ENCODE measurements at regions of chrX and their contacts with region 1.

Region 1: GRCh38 chrX:15143050-15143824 is 126.6 kb downstream of the ASB9 start:
- DNase-seq: peak; percentile 51 to 58
- H3K4me3 ChIP-seq: no peak overlapping the region
- H3K4me3 Mint-ChIP-seq: no peak overlapping the region
- H3K27ac Mint-ChIP-seq: peak overlapping the region; percentile 54
- H3K4me1 ChIP-seq: peaks cover 10% of the 10 kb centered on the region
- H3K4me1 Mint-ChIP-seq: peaks cover 7% of the 10 kb centered on the region
- H3K27me3 ChIP-seq: no peaks in the 10 kb centered on the region
- H3K27me3 Mint-ChIP-seq: no peaks in the 10 kb centered on the region
- CTCF ChIP-seq: peak; percentile 59 to 79

Region 2: DNA sequence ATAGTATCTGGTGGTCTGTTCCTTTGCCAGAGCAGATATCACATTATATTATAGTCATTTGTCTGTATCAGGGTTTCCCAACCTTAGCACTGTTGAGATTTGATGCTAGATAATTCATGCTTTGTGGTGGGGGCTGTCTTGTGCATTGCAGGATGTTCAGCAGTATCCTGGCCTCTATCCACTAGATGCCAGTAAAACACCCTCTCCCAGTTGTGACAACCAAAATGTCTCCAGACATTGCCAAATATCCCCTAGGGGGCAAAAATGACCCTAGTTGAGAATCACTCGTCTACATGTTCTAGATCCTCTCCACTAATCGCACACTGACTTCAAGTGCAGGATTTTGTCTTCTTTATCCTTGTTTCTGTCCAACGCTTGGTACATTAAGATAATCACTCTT is 431.1 kb before region 1 on chrX:
- CTCF ChIA-PET with region 1: no interaction called
- POLR2A ChIA-PET with region 1: no interaction called
- intact Hi-C with region 1: loop called (anchors 5 kb)
- DNase-seq: no peak
- H3K4me3 ChIP-seq: no peak overlapping the region
- H3K4me3 Mint-ChIP-seq: no peak overlapping the region
- H3K27ac Mint-ChIP-seq: no peak overlapping the region
- H3K4me1 ChIP-seq: no peaks in the 10 kb centered on the region
- H3K4me1 Mint-ChIP-seq: no peaks in the 10 kb centered on the region
- H3K27me3 ChIP-seq: no peaks in the 10 kb centered on the region
- H3K27me3 Mint-ChIP-seq: no peaks in the 10 kb centered on the region
- CTCF ChIP-seq: no peak

Region 3: DNA sequence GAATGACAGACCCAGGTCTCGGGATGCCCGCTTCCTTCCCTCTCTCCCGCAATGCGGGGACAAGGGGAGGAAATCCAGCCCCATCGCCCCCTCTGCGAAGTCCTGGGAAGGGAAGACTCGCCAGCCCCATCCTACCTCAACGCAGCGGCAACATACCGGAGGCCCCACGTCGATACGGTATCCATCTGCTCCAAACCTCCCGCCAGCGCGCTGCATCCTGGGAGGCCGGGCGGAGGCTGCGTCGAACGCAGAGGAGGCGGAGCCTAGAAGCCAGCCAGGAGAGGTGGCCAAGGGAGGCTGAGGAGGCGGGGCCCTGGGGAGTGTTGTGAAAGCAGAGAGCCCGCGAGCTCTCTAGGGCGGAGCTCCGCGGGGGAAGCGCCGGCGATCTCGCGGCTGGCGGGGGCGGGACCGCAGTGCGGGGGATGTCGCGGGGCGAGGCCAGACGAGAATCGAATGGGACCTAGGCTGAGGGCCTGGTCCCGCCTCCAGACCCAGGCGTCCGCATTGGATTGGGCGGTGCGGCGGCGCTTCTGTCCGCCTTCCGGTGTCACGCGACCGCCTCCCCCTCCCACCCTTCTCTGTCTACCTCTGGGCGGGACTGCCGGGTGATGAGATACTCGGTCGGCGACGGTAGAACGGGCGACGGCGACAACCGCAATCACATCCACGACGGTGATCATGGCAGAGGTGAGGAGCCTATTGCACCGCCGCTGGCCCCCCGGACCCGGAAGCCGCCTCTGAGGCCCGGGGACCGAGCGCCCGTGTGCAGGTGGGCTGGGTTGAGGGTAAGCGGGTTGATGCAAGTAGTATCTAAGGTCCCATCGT is 270.2 kb before region 1 on chrX and contains the starts of genes FANCB and MOSPD2:
- CTCF ChIA-PET with region 1: no interaction called
- POLR2A ChIA-PET with region 1: no interaction called
- intact Hi-C with region 1: loop called (anchors 10 kb)
- DNase-seq: peak; percentile 95 to 96
- H3K4me3 ChIP-seq: peak within 1 kb of the TSS; percentile 81
- H3K4me3 Mint-ChIP-seq: peak within 1 kb of the TSS; percentile 78
- H3K27ac Mint-ChIP-seq: peak within 1 kb of the TSS; percentile 64
- H3K4me1 ChIP-seq: no peaks in the 10 kb centered on the region
- H3K4me1 Mint-ChIP-seq: no peaks in the 10 kb centered on the region
- H3K27me3 ChIP-seq: no peaks in the 10 kb centered on the region
- H3K27me3 Mint-ChIP-seq: no peaks in the 10 kb centered on the region
- CTCF ChIP-seq: no peak
- total RNA-seq, gene FANCB: 8.1 and 8.8 TPM in 2 replicates
- total RNA-seq, gene MOSPD2: 13.0 and 13.8 TPM in 2 replicates

Region 4: GRCh38 chrX:15059474-15059873 is 83.8 kb before region 1 on chrX:
- CTCF ChIA-PET with region 1: no interaction called
- POLR2A ChIA-PET with region 1: no interaction called
- intact Hi-C with region 1: loop called (anchors 10 kb)
- DNase-seq: no peak
- H3K4me3 ChIP-seq: no peak overlapping the region
- H3K4me3 Mint-ChIP-seq: no peak overlapping the region
- H3K27ac Mint-ChIP-seq: peak overlapping the region; percentile 3
- H3K4me1 ChIP-seq: no peaks in the 10 kb centered on the region
- H3K4me1 Mint-ChIP-seq: peaks cover 17% of the 10 kb centered on the region
- H3K27me3 ChIP-seq: no peaks in the 10 kb centered on the region
- H3K27me3 Mint-ChIP-seq: no peaks in the 10 kb centered on the region
- CTCF ChIP-seq: no peak

Region 5: DNA sequence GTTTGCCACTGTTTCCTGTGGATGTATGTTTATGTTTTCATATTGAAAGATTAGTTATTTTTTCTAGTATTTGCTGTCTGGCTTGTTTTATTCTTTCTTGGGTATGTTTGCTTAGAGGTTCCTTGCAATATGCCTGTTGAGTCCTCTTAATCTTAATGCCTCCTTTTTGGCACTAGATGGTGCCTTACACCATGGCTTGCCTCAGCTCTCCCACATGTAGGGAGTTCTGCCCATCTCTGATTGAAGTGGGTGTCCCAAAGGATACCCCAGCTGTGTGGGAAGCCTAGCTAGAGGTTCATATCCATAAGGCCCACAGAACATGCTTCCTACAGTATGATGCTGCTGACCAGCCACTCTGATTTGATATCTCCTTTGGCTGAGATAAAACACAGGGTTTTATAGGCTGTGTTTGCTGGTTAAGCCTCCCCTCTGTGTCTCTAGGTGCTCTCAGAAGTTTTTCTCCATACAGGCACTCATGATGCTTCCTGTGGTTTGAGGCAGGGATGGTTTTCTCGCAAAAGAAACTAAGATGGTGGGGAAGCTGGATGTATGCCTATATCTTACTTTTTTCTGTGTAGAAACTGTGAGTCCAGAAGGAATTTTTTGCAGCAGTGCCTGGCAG is 35.8 kb before region 1 on chrX:
- CTCF ChIA-PET with region 1: no interaction called
- POLR2A ChIA-PET with region 1: no interaction called
- intact Hi-C with region 1: loop called (anchors 5 kb)
- DNase-seq: no peak
- H3K4me3 ChIP-seq: no peak overlapping the region
- H3K4me3 Mint-ChIP-seq: no peak overlapping the region
- H3K27ac Mint-ChIP-seq: no peak overlapping the region
- H3K4me1 ChIP-seq: no peaks in the 10 kb centered on the region
- H3K4me1 Mint-ChIP-seq: no peaks in the 10 kb centered on the region
- H3K27me3 ChIP-seq: no peaks in the 10 kb centered on the region
- H3K27me3 Mint-ChIP-seq: no peaks in the 10 kb centered on the region
- CTCF ChIP-seq: no peak

Region 6: DNA sequence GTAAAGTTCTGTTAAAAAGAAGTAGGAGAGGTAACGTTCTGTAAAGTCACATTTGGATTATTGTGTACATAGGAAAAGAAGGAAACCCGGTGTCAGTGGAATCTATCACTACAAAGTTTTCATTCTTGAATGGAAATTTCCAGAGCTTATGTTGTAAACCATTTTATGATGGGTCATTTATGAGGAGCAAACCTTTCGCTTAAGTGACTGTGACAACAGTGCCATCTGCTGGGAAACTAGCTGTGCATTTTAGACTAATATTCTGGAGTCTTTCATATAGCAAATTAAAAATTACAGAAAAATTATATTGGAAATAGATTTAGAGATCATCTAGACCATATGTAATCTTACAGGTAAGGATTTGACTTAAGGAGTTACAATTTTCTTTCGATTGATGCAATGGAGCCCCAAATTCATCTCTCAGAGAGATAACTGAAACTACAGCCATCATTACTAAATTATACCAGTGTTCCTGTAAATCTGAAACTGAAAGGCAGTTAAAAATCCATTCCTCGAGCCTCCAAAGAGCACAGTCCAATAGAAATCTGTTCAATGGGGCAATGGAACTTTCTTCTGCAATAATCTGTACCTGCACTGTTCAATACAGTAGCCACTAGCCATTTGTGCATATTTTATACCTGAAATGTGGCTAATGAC is 99.8 kb after region 1 on chrX:
- CTCF ChIA-PET with region 1: interaction called, 8 read pairs
- POLR2A ChIA-PET with region 1: no interaction called
- intact Hi-C with region 1: loop called (anchors 1 kb)
- DNase-seq: peak; percentile 24 to 36
- H3K4me3 ChIP-seq: no peak overlapping the region
- H3K4me3 Mint-ChIP-seq: no peak overlapping the region
- H3K27ac Mint-ChIP-seq: no peak overlapping the region
- H3K4me1 ChIP-seq: no peaks in the 10 kb centered on the region
- H3K4me1 Mint-ChIP-seq: no peaks in the 10 kb centered on the region
- H3K27me3 ChIP-seq: no peaks in the 10 kb centered on the region
- H3K27me3 Mint-ChIP-seq: no peaks in the 10 kb centered on the region
- CTCF ChIP-seq: peak; percentile 25 to 26

Region 7: DNA sequence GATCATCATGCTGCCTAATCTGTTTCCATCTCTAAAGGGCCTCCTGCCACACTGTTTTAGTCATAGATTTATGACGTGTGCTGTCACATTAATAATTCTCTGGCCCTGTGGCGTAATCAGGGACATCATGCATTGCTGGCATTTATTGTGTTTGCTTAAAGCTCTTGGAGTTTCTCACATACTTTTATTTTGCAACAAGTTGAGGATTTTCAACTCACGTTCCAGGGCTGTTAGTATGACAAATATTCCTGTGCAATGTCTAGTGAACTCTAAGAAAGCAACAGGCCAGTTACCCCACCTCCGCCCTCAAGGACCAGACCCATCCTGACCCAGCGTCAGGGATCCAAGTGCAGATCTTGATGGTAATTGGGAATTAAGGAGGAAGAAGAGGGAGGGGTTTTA is 199.8 kb after region 1 on chrX:
- CTCF ChIA-PET with region 1: no interaction called
- POLR2A ChIA-PET with region 1: no interaction called
- intact Hi-C with region 1: no loop called
- DNase-seq: peak; percentile 61 to 65
- H3K4me3 ChIP-seq: no peak overlapping the region
- H3K4me3 Mint-ChIP-seq: no peak overlapping the region
- H3K27ac Mint-ChIP-seq: no peak overlapping the region
- H3K4me1 ChIP-seq: 0 out of 2 replicates have a peak, but pooled peaks cover 3% of the 10 kb centered on the region
- H3K4me1 Mint-ChIP-seq: no peaks in the 10 kb centered on the region
- H3K27me3 ChIP-seq: no peaks in the 10 kb centered on the region
- H3K27me3 Mint-ChIP-seq: peaks cover 6% of the 10 kb centered on the region
- CTCF ChIP-seq: no peak

Region 8: GRCh38 chrX:15384304-15384703 is 241.1 kb after region 1 on chrX and contains the start of gene VEGFD:
- CTCF ChIA-PET with region 1: no interaction called
- POLR2A ChIA-PET with region 1: no interaction called
- intact Hi-C with region 1: no loop called
- DNase-seq: peak in 1 of 2 experiments; percentile 0
- H3K4me3 ChIP-seq: no peak within 1 kb of the TSS
- H3K4me3 Mint-ChIP-seq: no peak within 1 kb of the TSS
- H3K27ac Mint-ChIP-seq: no peak within 1 kb of the TSS
- H3K4me1 ChIP-seq: no peaks in the 10 kb centered on the region
- H3K4me1 Mint-ChIP-seq: no peaks in the 10 kb centered on the region
- H3K27me3 ChIP-seq: no peaks in the 10 kb centered on the region
- H3K27me3 Mint-ChIP-seq: no peaks in the 10 kb centered on the region
- CTCF ChIP-seq: no peak
- total RNA-seq, gene VEGFD: 0.36 TPM in 1 of 2 replicates, not detected in the other